Caco-2 (cell line): ENCODE measurements at regions of chr7 and their contacts with region 1.

Region 1: GRCh38 chr7:149090397-149091195 is at the start of gene ZNF786:
- DNase-seq: peak; percentile 88 to 92
- H3K4me3 ChIP-seq: peak within 1 kb of the TSS; percentile 100
- H3K4me3 Mint-ChIP-seq: peak within 1 kb of the TSS; percentile 81
- H3K27ac Mint-ChIP-seq: peak within 1 kb of the TSS; percentile 91
- H3K4me1 ChIP-seq: peaks cover 8% of the 10 kb centered on the region; the same call in 1 of the 2 replicates
- H3K4me1 Mint-ChIP-seq: peaks cover 5% of the 10 kb centered on the region
- H3K27me3 ChIP-seq: no peaks in the 10 kb centered on the region
- H3K27me3 Mint-ChIP-seq: no peaks in the 10 kb centered on the region
- CTCF ChIP-seq: peak; percentile 79 to 86
- total RNA-seq, gene ZNF786: 9.4 and 9.5 TPM in 2 replicates

Region 2: GRCh38 chr7:148503875-148504487 is 586.6 kb before region 1 on chr7:
- CTCF ChIA-PET with region 1: no interaction called
- POLR2A ChIA-PET with region 1: no interaction called
- intact Hi-C with region 1: loop called (anchors 5 kb)
- DNase-seq: peak in 1 of 2 experiments; percentile 29
- H3K4me3 ChIP-seq: no peak overlapping the region
- H3K4me3 Mint-ChIP-seq: no peak overlapping the region
- H3K27ac Mint-ChIP-seq: no peak overlapping the region
- H3K4me1 ChIP-seq: no peaks in the 10 kb centered on the region
- H3K4me1 Mint-ChIP-seq: peaks cover 20% of the 10 kb centered on the region
- H3K27me3 ChIP-seq: no peaks in the 10 kb centered on the region
- H3K27me3 Mint-ChIP-seq: no peaks in the 10 kb centered on the region
- CTCF ChIP-seq: peak; percentile 68 to 76

Region 3: GRCh38 chr7:148987010-148987750 is 103.4 kb before region 1 on chr7:
- CTCF ChIA-PET with region 1: no interaction called
- POLR2A ChIA-PET with region 1: no interaction called
- intact Hi-C with region 1: loop called (anchors 5 kb)
- DNase-seq: peak; percentile 90 to 95
- H3K4me3 ChIP-seq: peak overlapping the region; percentile 50
- H3K4me3 Mint-ChIP-seq: peak overlapping the region; percentile 84
- H3K27ac Mint-ChIP-seq: peak overlapping the region; percentile 85
- H3K4me1 ChIP-seq: peaks cover 13% of the 10 kb centered on the region
- H3K4me1 Mint-ChIP-seq: peaks cover 44% of the 10 kb centered on the region
- H3K27me3 ChIP-seq: no peaks in the 10 kb centered on the region
- H3K27me3 Mint-ChIP-seq: no peaks in the 10 kb centered on the region
- CTCF ChIP-seq: no peak

Region 4: DNA sequence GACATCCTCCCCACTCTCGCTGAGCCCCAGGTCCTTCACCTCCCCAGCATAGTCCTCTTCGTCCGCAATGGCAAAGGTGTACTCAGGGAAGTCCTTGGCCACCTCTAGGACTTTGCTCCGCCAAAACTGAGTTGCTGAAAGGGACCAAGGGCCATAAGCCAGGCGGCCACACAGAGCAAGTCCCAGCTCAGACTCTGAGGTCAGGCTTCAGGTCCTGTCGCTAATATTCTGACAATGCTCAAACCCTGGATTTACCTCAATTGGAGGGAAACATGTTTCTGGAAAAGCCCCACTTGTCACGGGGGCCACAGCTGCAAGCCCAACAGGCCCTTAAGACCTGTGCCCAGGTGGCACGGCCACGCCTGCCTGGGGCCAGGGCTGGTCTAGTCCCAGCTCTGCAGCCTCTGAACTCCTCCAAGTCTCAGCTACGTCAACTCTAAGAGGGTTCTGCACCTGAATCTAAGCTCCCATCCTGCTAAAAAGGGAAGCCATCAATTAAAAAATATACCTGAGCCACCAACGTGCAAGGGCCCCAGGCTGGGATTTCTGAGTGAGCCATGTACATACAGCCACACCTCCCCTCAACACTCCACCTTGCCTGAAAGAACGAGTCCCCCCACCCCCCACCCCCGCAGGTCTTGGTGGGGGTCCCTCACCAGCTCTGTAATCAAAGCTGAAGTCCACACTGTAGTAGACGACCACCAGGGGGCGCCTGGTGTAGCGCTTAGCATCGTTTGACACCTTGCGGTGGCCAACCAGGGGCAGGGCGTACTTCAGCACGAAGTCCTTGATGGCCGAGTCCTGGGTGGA is 85.2 kb before region 1 on chr7:
- CTCF ChIA-PET with region 1: no interaction called
- POLR2A ChIA-PET with region 1: no interaction called
- intact Hi-C with region 1: loop called (anchors 1 kb)
- DNase-seq: peak; percentile 75 to 76
- H3K4me3 ChIP-seq: no peak overlapping the region
- H3K4me3 Mint-ChIP-seq: no peak overlapping the region
- H3K27ac Mint-ChIP-seq: no peak overlapping the region
- H3K4me1 ChIP-seq: no peaks in the 10 kb centered on the region
- H3K4me1 Mint-ChIP-seq: no peaks in the 10 kb centered on the region
- H3K27me3 ChIP-seq: no peaks in the 10 kb centered on the region
- H3K27me3 Mint-ChIP-seq: no peaks in the 10 kb centered on the region
- CTCF ChIP-seq: peak; percentile 72 to 90

Region 5: GRCh38 chr7:149067876-149068275 is 22.7 kb before region 1 on chr7:
- CTCF ChIA-PET with region 1: no interaction called
- POLR2A ChIA-PET with region 1: no interaction called
- intact Hi-C with region 1: loop called (anchors 1 kb)
- DNase-seq: peak in 1 of 2 experiments; percentile 13
- H3K4me3 ChIP-seq: no peak overlapping the region
- H3K4me3 Mint-ChIP-seq: no peak overlapping the region
- H3K27ac Mint-ChIP-seq: no peak overlapping the region
- H3K4me1 ChIP-seq: peaks cover 3% of the 10 kb centered on the region; the same call in 1 of the 2 replicates
- H3K4me1 Mint-ChIP-seq: no peaks in the 10 kb centered on the region
- H3K27me3 ChIP-seq: no peaks in the 10 kb centered on the region
- H3K27me3 Mint-ChIP-seq: no peaks in the 10 kb centered on the region
- CTCF ChIP-seq: no peak

Region 6: DNA sequence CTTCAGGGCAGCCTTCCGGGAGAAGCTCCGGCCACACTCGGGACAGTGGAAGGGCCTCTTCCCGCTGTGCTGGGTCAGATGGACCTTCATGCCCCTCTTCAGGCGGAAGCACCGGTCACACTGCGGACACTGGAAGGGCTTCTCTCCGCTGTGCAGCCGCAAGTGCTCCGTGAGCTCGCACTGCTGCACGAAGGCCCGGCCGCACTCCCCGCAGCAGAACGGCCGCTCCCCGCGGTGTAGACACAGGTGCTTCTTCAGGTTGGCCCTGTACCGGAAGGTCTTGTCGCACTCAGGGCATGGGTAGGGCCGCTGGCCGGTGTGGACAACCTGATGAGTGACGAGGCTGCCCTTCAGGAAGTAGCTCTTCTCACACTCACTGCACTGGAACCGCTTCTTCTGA is 14.2 kb after region 1 on chr7:
- CTCF ChIA-PET with region 1: no interaction called
- POLR2A ChIA-PET with region 1: no interaction called
- intact Hi-C with region 1: no loop called
- DNase-seq: no peak
- H3K4me3 ChIP-seq: no peak overlapping the region
- H3K4me3 Mint-ChIP-seq: no peak overlapping the region
- H3K27ac Mint-ChIP-seq: no peak overlapping the region
- H3K4me1 ChIP-seq: no peaks in the 10 kb centered on the region
- H3K4me1 Mint-ChIP-seq: peaks cover 6% of the 10 kb centered on the region
- H3K27me3 ChIP-seq: no peaks in the 10 kb centered on the region
- H3K27me3 Mint-ChIP-seq: no peaks in the 10 kb centered on the region
- CTCF ChIP-seq: no peak

Region 7: GRCh38 chr7:149125863-149126661 is 35.5 kb after region 1 on chr7 and contains the start of gene ZNF425:
- CTCF ChIA-PET with region 1: interaction called, 6 read pairs
- POLR2A ChIA-PET with region 1: interaction called, 3 read pairs
- intact Hi-C with region 1: loop called (anchors 1 kb)
- DNase-seq: peak; percentile 93 to 97
- H3K4me3 ChIP-seq: peak within 1 kb of the TSS; percentile 74
- H3K4me3 Mint-ChIP-seq: peak within 1 kb of the TSS; percentile 75
- H3K27ac Mint-ChIP-seq: peak within 1 kb of the TSS; percentile 84
- H3K4me1 ChIP-seq: peaks cover 7% of the 10 kb centered on the region; the same call in 1 of the 2 replicates
- H3K4me1 Mint-ChIP-seq: peaks cover 11% of the 10 kb centered on the region
- H3K27me3 ChIP-seq: no peaks in the 10 kb centered on the region
- H3K27me3 Mint-ChIP-seq: no peaks in the 10 kb centered on the region
- CTCF ChIP-seq: peak; percentile 94
- total RNA-seq, gene ZNF425: 2.6 and 4.0 TPM in 2 replicates

Region 8: DNA sequence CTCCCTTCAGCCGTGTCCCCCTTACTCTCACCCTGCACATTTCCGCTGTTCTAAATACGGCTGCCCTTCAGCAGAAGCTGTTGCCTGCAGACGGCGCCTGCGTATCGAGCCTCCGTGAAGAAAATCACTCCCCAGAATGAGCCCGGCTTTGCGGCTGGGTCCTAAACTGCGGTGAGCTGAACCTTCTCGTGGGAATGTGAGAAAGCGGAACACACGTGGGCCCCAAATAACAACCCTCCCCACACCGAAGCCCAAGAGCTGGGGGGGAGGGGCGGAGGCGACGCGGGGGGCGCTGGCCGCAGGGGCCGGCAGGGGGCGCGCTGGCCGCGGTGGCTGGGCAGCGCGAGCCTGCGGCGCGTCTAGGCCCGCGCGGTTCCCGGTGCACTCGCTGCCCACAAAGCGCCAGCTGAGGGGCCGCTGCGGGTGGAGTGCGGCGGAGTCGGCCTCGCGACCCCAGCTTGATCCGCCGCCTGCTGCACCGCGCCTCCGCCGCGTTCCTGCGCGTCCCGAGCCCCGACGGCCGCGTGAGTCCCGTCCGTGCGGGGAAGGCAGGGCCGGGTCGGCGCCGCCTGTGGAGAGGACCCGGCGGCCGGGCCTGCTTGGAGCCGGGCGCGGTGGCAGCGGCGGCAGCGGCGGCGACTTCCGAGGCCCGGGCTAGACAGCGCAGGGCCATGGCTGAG is 56.6 kb after region 1 on chr7 and contains the start of gene ZNF398:
- CTCF ChIA-PET with region 1: no interaction called
- POLR2A ChIA-PET with region 1: no interaction called
- intact Hi-C with region 1: loop called (anchors 5 kb)
- DNase-seq: peak; percentile 73 to 85
- H3K4me3 ChIP-seq: peak within 1 kb of the TSS; percentile 97
- H3K4me3 Mint-ChIP-seq: peak within 1 kb of the TSS; percentile 97
- H3K27ac Mint-ChIP-seq: peak within 1 kb of the TSS; percentile 79
- H3K4me1 ChIP-seq: peaks cover 10% of the 10 kb centered on the region
- H3K4me1 Mint-ChIP-seq: peaks cover 28% of the 10 kb centered on the region
- H3K27me3 ChIP-seq: no peaks in the 10 kb centered on the region
- H3K27me3 Mint-ChIP-seq: no peaks in the 10 kb centered on the region
- CTCF ChIP-seq: peak; percentile 47 to 72
- total RNA-seq, gene ZNF398: 13.0 and 13.4 TPM in 2 replicates